ENCODE measurements at regions of chr13 and their contacts with region 1.

Region 1: DNA sequence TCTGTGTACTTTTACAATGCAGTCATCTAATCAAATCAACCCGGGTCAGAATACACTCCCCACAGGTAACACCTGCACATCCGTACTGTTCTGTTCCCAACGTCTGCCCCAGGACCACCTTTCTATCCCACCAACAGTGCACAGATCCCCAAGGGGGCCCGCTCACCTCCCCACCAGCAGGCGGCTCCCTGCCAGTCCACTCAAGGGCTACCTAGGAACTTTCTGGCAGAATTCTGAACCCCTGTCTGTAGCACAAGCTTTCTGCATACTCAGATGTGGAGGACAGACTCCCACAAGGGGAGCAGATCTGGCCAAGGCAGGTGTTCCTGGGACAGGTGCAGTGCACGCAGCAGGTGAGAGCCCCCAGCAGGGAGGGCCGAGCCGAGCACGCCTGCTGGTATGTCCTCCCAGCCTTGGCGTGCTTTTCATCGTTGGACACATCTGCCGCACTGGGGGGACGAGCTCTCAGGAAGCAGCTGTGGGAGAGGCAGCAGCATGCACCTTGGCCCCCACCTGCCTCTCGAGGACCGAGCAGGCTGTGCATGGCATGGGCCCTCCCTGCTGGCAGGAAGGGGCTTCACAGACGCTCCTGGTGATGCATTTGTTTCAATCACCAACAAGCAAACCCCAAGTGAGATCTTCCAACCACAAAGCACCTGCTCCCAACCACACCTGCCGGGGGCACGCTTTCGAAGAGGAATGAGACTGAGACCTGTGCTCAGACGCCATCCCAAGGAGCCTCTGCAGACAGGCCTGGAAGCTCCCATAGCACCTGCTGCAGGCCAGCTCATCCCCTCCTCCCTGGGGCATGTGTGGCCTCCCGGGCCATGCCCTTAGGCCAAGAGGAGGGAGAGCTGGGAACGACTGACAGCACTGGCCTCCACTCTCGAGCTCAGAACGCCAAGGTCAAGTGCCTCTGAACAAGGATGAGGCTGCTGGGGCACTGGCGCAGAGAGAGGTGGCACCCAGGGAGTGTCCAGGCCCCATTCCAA is 35.9 kb downstream of the RAB20 start:
- DNase-seq: peak in 1 of 2 donors; percentile 46
- ATAC-seq: peak in 1 of 2 donors; percentile 39
- H3K4me3 ChIP-seq: no peak overlapping the region
- H3K27ac ChIP-seq: peak overlapping the region in 3 of 4 donors; percentile 29 to 85 (median 64)
- H3K4me1 ChIP-seq: peaks cover 7 to 41% of the 10 kb centered on the region in 2 donors
- H3K27me3 ChIP-seq: no peaks in the 10 kb centered on the region
- CTCF ChIP-seq: no peak
- POLR2A ChIP-seq: no peak

Region 2: GRCh38 chr13:110455941-110456340 is 69.7 kb before region 1 on chr13:
- in situ Hi-C with region 1: no loop called
- intact Hi-C with region 1: loop called (anchors 2 kb)
- DNase-seq: peak; percentile 54 to 74
- ATAC-seq: peak; percentile 82 to 96
- H3K4me3 ChIP-seq: peak overlapping the region in 1 of 4 donors; percentile 27
- H3K27ac ChIP-seq: no peak overlapping the region
- H3K4me1 ChIP-seq: no peaks in the 10 kb centered on the region
- H3K27me3 ChIP-seq: no peaks in the 10 kb centered on the region
- CTCF ChIP-seq: peak; percentile 69 to 82 (median 74)
- POLR2A ChIP-seq: no peak

Region 3: GRCh38 chr13:110499621-110500281 is 25.9 kb before region 1 on chr13:
- in situ Hi-C with region 1: no loop called
- intact Hi-C with region 1: loop called (anchors 2 kb)
- DNase-seq: no peak
- ATAC-seq: no peak
- H3K4me3 ChIP-seq: no peak overlapping the region
- H3K27ac ChIP-seq: peak overlapping the region in 2 of 4 donors; percentile 76 to 85
- H3K4me1 ChIP-seq: peaks cover 5 to 10% of the 10 kb centered on the region in 2 donors
- H3K27me3 ChIP-seq: no peaks in the 10 kb centered on the region
- CTCF ChIP-seq: no peak
- POLR2A ChIP-seq: no peak

Region 4: DNA sequence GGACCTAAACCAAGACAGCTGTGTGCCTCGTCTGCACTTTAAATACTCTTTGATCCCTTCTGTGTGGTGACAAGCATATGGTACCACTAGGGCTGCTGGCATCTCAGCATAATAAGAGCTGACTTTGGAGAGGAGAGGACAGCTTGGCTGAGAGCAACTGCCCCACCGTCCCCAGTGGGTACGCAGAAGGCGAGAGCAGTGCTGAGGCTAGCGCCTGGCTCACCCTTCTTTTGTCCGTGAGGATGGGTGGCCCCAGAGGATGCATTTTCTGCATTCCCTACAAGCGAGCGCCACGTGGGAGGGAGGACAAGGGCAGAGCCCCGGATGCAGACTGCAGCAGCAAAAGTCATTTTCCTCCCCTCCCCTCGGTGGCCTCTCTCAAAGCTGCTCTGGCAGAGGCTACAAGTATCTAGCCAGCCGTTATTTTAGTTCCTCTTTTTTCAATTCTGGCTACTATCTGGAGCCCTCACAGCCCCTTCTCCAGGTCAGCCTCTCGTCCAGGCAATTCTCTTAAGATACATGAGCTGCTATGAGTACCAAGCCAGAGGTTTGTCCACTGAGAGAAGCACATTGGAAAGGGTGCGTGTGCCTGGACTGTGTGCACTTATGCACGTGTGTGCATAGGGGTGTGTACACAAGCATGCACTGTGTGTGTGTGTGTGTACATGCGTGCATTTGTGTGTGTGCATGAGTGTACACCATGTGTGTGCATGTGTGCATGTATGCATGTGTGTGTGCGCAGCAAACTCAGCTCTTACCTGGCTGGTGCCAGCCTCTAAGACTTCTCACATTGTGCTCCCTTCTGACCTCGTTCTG is 15.4 kb before region 1 on chr13:
- in situ Hi-C with region 1: no loop called
- intact Hi-C with region 1: loop called (anchors 1 kb)
- DNase-seq: no peak
- ATAC-seq: no peak
- H3K4me3 ChIP-seq: no peak overlapping the region
- H3K27ac ChIP-seq: peak overlapping the region; percentile 52 to 85 (median 53)
- H3K4me1 ChIP-seq: peaks cover 11 to 12% of the 10 kb centered on the region in 2 donors
- H3K27me3 ChIP-seq: no peaks in the 10 kb centered on the region
- CTCF ChIP-seq: no peak
- POLR2A ChIP-seq: no peak

Region 5: GRCh38 chr13:110929104-110929777 is 403.6 kb after region 1 on chr13:
- in situ Hi-C with region 1: no loop called
- intact Hi-C with region 1: no loop called
- DNase-seq: no peak
- ATAC-seq: no peak
- H3K4me3 ChIP-seq: no peak overlapping the region
- H3K27ac ChIP-seq: no peak overlapping the region
- H3K4me1 ChIP-seq: peaks cover 8 to 20% of the 10 kb centered on the region in 2 donors
- H3K27me3 ChIP-seq: no peaks in the 10 kb centered on the region
- CTCF ChIP-seq: no peak
- POLR2A ChIP-seq: no peak

Measured in gastrocnemius medialis (tissue), 4 donors.